ENCODE measurements at regions of chr7 and their contacts with region 1.

Region 1: DNA sequence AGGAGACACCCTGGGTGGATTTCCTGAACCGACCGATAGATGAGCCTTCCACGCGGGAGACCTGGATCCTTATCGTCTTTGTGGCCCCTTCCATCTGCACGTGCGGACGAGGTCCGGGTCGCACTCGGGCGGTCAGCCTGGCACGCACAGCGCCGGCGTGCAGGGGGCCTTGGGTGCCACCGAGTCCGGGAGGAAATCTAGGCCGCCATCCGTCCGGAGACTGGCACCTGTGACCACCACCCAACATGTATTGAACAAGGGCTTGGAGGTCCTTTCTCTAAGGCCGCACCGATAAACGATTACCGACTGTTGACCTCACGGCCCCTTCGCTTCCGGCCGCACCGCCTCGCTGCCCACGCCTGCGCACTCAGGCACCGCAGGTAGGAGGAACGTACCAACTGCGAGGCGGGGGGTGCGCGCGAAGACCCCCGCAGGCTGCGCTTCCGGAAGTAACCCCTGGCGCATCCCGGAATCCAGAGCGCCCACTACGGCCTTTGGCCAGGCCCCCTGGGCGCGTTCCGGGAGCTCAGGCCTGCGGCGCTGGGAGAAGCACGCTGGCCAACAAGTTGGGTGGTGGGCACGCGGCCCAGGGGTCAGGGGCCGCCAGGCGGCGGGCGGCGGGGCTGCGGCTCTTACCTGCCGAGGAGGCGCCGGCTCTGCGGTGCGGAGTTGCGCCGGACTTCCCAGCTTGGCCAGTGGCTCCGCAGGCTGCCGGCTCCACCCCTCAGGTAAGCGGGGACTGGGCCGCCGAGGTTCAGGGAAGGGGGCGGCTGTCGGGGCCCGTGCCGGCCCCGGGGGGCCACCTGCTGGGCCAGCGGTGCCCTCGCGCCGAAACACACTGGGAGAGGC is at the starts of genes ACTR3C and LRRC61:
- DNase-seq: peak; percentile 91
- H3K4me3 Mint-ChIP-seq: peak within 1 kb of the TSS; percentile 99
- H3K27ac Mint-ChIP-seq: peak within 1 kb of the TSS; percentile 100
- H3K4me1 Mint-ChIP-seq: peaks cover 49% of the 10 kb centered on the region
- H3K27me3 Mint-ChIP-seq: no peaks in the 10 kb centered on the region
- total RNA-seq, gene ACTR3C: 7.9 and 11.7 TPM in 2 replicates
- total RNA-seq, gene LRRC61: 26.8 and 27.5 TPM in 2 replicates

Region 2: DNA sequence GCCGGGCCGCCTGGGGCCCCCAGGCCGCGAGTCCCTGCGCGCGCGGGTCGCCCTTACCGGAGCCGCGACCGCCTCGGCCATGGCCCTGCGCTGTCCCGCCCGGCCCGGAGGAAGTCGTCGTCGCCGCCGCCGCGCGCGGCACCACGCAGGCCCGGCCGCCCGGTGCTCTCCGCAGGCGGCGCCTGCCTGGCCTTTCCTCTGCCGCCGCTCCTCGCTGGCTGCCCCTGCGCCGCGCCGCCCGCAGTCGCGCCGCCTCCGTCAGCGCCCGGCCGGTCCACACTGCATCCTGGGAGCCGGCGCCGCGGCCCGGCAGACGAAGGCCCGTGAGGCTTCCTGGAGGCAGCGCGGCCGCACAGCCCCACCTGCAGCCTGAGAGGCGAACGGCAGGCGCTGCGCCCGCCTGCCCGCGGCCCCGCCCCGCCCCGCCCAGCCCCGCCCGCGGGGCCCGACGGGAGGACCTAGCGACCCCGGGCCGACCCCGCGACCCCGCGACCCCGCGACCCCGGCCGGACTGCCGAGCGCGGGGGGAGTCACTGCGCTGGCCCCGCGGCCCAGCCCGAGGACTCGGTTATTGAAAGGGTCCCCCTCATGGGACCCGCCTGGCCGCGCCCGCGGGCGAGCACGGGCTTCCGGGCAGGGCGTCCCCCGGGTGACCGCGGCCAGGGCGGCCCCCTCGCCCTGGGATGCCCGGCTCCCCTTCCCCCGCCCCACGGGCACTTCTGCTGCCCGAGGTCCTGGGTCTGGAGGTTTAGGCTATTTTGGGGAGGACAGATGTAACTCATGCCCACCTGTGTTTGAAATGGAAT is 825.4 kb before region 1 on chr7 and contains the start of gene ZNF746:
- intact Hi-C with region 1: loop called (anchors 10 kb)
- DNase-seq: peak; percentile 95
- H3K4me3 Mint-ChIP-seq: peak within 1 kb of the TSS; percentile 97
- H3K27ac Mint-ChIP-seq: peak within 1 kb of the TSS; percentile 96
- H3K4me1 Mint-ChIP-seq: peaks cover 19% of the 10 kb centered on the region
- H3K27me3 Mint-ChIP-seq: peaks cover 2% of the 10 kb centered on the region
- total RNA-seq, gene ZNF746: 23.3 and 24.8 TPM in 2 replicates

Region 3: DNA sequence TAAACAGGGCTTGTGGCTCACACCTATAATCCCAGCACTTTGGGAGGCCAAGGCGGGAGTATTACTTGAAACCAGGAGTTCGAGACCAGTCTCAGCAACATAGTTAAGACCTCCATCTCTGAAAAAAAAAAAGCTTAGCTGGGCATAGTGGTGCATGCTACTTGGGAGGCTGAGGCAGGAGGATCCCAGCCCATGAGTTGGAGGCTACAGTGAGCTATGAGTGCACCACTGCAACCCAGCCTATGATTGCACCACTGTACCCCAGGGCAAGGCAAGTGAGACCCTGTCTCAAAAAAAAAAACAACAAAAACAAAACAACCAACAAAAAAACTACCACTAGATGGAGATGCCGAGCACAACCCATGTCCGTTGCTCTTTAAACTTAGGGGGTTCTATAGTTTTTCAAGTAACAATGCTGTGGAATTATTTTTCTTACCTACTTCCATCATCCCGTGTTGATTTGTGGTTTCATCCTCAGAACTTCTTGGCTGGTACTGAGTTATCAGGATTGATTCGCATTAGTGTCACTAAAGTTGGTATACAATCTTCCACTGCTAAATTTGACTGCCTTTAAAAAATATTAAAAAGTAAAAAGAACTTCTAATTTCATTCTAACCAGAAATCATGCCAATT is 33.3 kb after region 1 on chr7:
- intact Hi-C with region 1: loop called (anchors 1 kb)
- DNase-seq: peak; percentile 79
- H3K4me3 Mint-ChIP-seq: no peak overlapping the region
- H3K27ac Mint-ChIP-seq: peak overlapping the region; percentile 41
- H3K4me1 Mint-ChIP-seq: peaks cover 39% of the 10 kb centered on the region
- H3K27me3 Mint-ChIP-seq: peaks cover 3% of the 10 kb centered on the region

Region 4: GRCh38 chr7:150368096-150368883 is 45.2 kb after region 1 on chr7 and contains the start of gene REPIN1:
- intact Hi-C with region 1: loop called (anchors 1 kb)
- DNase-seq: peak; percentile 94
- H3K4me3 Mint-ChIP-seq: peak within 1 kb of the TSS; percentile 98
- H3K27ac Mint-ChIP-seq: peak within 1 kb of the TSS; percentile 97
- H3K4me1 Mint-ChIP-seq: peaks cover 40% of the 10 kb centered on the region
- H3K27me3 Mint-ChIP-seq: no peaks in the 10 kb centered on the region
- total RNA-seq, gene REPIN1: 73.6 and 79.7 TPM in 2 replicates

Region 5: GRCh38 chr7:150404805-150405583 is 81.9 kb after region 1 on chr7:
- intact Hi-C with region 1: loop called (anchors 1 kb)
- DNase-seq: peak; percentile 95
- H3K4me3 Mint-ChIP-seq: peak overlapping the region; percentile 87
- H3K27ac Mint-ChIP-seq: peak overlapping the region; percentile 89
- H3K4me1 Mint-ChIP-seq: peaks cover 34% of the 10 kb centered on the region
- H3K27me3 Mint-ChIP-seq: no peaks in the 10 kb centered on the region

Region 6: DNA sequence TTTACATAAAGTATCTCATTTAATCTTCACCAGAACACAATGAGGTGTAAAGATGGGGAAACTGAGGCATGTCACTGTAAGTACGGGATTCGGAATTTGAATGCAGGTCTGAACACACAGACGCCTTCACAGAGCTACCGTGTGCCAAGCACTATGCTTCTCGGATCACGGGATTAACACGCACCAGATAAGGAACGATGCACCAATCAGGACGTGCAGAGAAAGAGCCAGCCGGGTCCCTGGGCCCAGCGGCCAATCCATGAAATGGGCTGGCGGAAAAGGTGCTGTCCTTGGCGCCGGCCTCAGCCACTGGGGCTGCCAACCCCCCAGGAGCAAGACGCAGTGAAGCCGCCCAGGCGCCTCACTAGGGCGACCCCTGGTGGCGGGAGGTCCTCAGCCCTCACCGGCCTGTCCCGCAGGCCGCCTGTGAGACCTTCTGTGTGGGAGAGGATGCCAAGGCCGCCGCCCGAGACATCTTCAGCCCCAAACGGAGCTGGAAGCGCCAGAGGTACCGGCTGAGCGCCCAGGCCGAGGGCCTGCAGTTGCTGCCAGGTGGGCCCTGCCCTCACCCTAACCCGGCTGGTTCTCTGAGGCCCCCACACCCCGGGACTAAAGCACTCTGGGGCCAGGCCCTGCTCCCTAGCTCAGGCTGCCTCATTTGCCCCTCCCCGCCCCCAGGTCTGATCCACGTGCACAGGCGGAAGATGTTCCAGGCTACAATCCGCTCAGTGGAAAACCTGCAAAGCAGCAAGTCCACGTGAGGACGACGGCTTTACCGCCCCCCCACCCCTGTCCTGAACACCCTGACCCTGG is 685.7 kb after region 1 on chr7:
- intact Hi-C with region 1: loop called (anchors 2 kb)
- DNase-seq: peak; percentile 92
- H3K4me3 Mint-ChIP-seq: peak overlapping the region; percentile 84
- H3K27ac Mint-ChIP-seq: peak overlapping the region; percentile 90
- H3K4me1 Mint-ChIP-seq: peaks cover 46% of the 10 kb centered on the region
- H3K27me3 Mint-ChIP-seq: no peaks in the 10 kb centered on the region